Posterior cingulate gyrus (tissue), 11 donors: ENCODE measurements at regions of chr15 and their contacts with region 1.

Region 1: GRCh38 chr15:41557673-41558399 is 1.2 kb upstream of the TYRO3 start:
- DNase-seq: peak; percentile 75 to 98 (median 82)

Region 2: DNA sequence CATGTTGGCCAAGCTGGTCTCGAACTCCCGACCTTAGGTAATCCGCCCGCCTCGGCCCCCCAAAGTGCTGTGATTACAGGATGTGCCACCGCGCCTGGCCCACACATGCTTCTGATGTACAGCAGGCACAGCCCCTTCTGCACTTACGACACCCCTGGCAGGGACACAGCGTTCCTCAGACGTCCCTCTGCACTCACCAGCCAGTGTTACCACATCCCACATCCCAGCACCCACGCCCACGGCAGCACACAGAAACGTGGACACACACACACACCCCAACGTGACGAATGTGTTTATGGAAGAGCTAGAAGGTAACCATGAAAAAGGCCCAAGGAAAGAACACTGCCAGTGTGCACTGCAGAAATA is 13.2 kb before region 1 on chr15:
- intact Hi-C with region 1: loop called (anchors 1 kb)
- DNase-seq: peak in 8 of 10 donors; percentile 45 to 95 (median 68)

Region 3: DNA sequence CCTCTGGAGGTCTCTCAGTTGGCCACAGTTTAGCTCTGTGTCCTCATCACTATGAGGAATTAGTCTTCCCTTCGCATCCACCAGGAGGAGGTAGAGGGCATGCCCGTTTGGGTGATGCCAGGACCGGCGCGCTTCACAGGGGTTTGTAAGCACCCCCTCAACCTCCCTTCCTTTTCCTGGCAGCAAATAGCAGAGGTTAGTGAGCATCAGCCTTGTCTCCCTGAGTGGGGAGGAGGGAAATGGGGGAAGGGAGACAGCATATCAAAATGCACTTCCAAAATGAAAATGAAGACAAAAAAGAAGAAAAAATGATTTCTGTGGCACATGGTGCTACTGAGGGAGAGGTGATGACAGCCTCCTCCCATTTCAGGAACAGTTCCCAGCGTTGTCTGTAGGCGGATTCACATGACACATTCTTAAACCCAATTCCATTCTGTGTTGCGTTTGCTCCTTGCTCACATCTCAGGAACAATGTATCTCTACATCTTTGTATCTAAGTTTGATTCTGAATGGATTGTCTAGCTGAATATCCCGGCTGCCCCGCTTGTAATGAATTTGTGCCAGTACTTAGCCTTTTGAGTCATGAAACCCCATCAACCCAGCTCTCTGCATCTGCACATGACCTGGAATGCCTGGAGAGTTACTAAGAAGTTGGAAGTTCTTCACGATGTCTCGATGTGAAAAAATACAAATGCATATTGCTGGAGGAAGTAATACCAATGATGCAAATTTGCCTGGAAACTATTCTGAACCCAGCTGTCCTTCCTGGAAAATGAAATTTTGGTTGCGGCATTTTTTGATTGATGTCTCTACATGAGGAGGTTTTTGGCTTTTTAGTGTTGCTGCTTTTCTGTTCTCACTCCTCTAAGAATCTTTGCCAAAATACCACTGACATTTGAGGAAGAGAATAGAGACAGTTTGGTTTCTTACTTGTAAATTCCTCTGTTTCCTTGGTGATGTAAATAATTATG is 46.4 kb after region 1 on chr15:
- intact Hi-C with region 1: loop called (anchors 5 kb)
- DNase-seq: peak; percentile 35 to 93 (median 66)

Region 4: DNA sequence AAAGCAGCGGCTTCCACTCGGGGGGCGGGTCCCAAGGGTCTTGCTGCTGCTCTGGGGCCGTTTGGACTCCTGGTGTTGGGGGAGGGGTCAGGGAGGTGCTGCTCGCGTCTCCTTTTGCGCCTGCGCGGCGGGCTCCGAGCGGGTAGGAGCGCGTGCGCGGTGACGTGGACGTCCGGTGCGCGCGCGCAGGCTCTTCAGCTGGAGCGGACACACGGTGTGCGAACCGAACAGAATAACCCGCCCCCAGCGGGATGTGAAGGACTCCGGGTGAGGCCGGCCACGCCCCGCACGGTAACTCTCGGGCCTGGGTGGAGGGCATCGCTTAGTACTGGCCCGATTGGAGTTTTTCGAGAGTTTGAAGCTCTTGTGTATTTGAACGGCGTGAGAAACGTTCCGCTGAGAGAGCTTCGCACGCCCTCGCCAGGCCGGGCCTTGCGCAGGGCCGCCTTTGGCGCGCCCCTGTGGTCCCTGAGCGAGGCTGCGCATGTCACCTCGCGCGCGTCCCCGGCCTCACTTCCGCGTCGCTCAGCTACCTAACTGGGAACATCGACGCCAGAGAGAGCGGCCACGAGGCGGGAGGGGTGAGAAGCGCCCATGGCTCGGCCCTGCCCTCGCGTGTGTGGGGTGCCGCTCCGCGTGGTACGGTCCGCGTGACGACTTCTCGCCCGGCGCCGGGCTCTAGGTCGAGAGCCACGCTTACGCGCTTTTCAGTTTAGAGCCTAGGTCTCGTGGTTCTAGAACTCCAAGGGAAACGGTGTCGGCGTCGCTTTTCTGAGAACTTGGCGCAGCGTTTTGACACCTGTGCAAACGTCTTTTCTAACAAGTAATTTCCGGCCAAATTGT is 102.6 kb after region 1 on chr15 and contains the start of gene MGA:
- intact Hi-C with region 1: loop called (anchors 2 kb)
- DNase-seq: peak; percentile 67 to 97 (median 78)

Region 5: DNA sequence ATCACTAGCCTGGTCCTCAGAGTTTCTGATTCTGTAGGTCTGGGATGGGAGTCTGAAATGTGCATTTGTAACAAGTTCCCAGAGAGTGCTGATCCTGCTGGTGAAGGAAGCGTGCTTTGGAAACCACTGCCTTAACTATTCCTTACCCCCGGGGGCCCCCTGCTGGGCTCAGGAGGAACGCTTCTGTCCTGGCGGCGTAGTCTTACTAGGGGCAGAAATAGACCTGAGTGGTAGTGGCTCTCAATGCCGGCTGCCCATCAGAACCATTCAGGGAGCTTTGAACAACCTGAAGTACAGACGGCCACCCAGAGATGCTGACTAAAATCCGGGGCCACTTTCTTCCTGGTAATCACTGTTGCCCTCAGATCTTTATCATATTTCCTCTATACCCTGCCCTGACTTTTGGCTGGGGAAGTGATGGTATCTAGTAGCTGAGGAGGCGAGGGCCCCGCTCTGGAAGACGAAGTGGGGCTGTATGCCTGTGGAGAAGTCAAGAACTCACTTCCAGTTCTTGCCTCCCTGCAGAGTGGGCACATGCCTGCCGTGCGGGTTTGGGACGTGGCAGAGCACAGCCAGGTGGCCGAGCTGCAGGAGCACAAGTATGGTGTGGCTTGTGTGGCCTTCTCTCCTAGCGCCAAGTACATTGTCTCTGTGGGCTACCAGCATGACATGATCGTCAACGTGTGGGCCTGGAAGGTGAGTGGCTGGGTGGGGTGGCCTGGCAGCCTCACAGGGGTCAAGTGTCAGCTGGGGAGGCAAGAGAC is 253.8 kb after region 1 on chr15:
- intact Hi-C with region 1: loop called (anchors 5 kb)
- DNase-seq: peak; percentile 75 to 98 (median 90)